Caco-2 (cell line): ENCODE measurements at regions of chr4 and their contacts with region 1.

Region 1: GRCh38 chr4:81818385-81818920 is 346.7 kb upstream of the RASGEF1B start:
- DNase-seq: peak; percentile 78 to 82
- H3K4me3 ChIP-seq: no peak overlapping the region
- H3K4me3 Mint-ChIP-seq: peak overlapping the region; percentile 49
- H3K27ac Mint-ChIP-seq: peak overlapping the region; percentile 66
- H3K4me1 ChIP-seq: peaks cover 29% of the 10 kb centered on the region
- H3K4me1 Mint-ChIP-seq: peaks cover 22% of the 10 kb centered on the region
- H3K27me3 ChIP-seq: no peaks in the 10 kb centered on the region
- H3K27me3 Mint-ChIP-seq: no peaks in the 10 kb centered on the region
- CTCF ChIP-seq: no peak

Region 2: DNA sequence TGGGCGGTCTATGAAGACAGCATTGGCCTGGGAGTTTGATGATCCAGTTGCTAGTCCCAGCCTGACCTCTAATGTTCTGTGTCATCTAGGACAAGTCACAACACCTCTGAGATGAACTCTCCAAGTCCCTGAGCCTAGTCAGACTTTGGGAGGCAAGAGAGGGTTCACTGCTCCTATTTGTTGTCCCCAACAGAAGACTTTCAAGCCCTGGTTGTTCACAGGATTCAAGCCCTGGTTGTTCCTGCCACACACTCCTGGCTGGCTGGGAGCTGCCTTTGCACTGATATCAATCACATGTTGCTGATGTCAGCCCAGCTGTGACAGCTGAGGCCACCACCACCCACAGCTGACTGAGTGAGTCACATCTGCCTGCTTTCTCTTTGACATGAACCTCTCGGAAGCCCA is 93.5 kb before region 1 on chr4:
- CTCF ChIA-PET with region 1: no interaction called
- POLR2A ChIA-PET with region 1: no interaction called
- intact Hi-C with region 1: loop called (anchors 1 kb)
- DNase-seq: peak; percentile 62 to 67
- H3K4me3 ChIP-seq: no peak overlapping the region
- H3K4me3 Mint-ChIP-seq: peak overlapping the region; percentile 20
- H3K27ac Mint-ChIP-seq: peak overlapping the region; percentile 51
- H3K4me1 ChIP-seq: peaks cover 35% of the 10 kb centered on the region
- H3K4me1 Mint-ChIP-seq: peaks cover 39% of the 10 kb centered on the region
- H3K27me3 ChIP-seq: no peaks in the 10 kb centered on the region
- H3K27me3 Mint-ChIP-seq: no peaks in the 10 kb centered on the region
- CTCF ChIP-seq: no peak

Region 3: GRCh38 chr4:81771721-81772120 is 46.7 kb before region 1 on chr4:
- CTCF ChIA-PET with region 1: no interaction called
- POLR2A ChIA-PET with region 1: interaction called, 6 read pairs
- intact Hi-C with region 1: loop called (anchors 1 kb)
- DNase-seq: no peak
- H3K4me3 ChIP-seq: no peak overlapping the region
- H3K4me3 Mint-ChIP-seq: no peak overlapping the region
- H3K27ac Mint-ChIP-seq: peak overlapping the region; percentile 94
- H3K4me1 ChIP-seq: peaks cover 27% of the 10 kb centered on the region
- H3K4me1 Mint-ChIP-seq: peaks cover 15% of the 10 kb centered on the region
- H3K27me3 ChIP-seq: no peaks in the 10 kb centered on the region
- H3K27me3 Mint-ChIP-seq: no peaks in the 10 kb centered on the region
- CTCF ChIP-seq: no peak